MCF 10A (cell line): ENCODE measurements at regions of chr2 and their contacts with region 1.

Region 1: GRCh38 chr2:178414266-178415247 is 36.4 kb downstream of the PRKRA start:
- DNase-seq: peak; percentile 98
- H3K4me3 Mint-ChIP-seq: peak overlapping the region; percentile 96
- H3K27ac Mint-ChIP-seq: peak overlapping the region; percentile 91
- H3K4me1 Mint-ChIP-seq: peaks cover 27% of the 10 kb centered on the region
- H3K27me3 Mint-ChIP-seq: no peaks in the 10 kb centered on the region
- CTCF ChIP-seq: peak; percentile 71

Region 2: GRCh38 chr2:177174486-177174885 is 1240.1 kb before region 1 on chr2:
- CTCF ChIA-PET with region 1: no interaction called
- POLR2A ChIA-PET with region 1: no interaction called
- intact Hi-C with region 1: no loop called
- DNase-seq: no peak
- H3K4me3 Mint-ChIP-seq: no peak overlapping the region
- H3K27ac Mint-ChIP-seq: no peak overlapping the region
- H3K4me1 Mint-ChIP-seq: peaks cover 29% of the 10 kb centered on the region
- H3K27me3 Mint-ChIP-seq: no peaks in the 10 kb centered on the region
- CTCF ChIP-seq: no peak

Region 3: GRCh38 chr2:178112202-178113152 is 302.1 kb before region 1 on chr2 and contains the start of gene RBM45:
- CTCF ChIA-PET with region 1: interaction called, 67 read pairs
- POLR2A ChIA-PET with region 1: interaction called, 61 read pairs
- intact Hi-C with region 1: loop called (anchors 1 kb)
- DNase-seq: peak; percentile 97
- H3K4me3 Mint-ChIP-seq: peak within 1 kb of the TSS; percentile 93
- H3K27ac Mint-ChIP-seq: peak within 1 kb of the TSS; percentile 87
- H3K4me1 Mint-ChIP-seq: peaks cover 7% of the 10 kb centered on the region
- H3K27me3 Mint-ChIP-seq: no peaks in the 10 kb centered on the region
- CTCF ChIP-seq: peak; percentile 94
- total RNA-seq, gene RBM45: 12.7 and 14.5 TPM in 2 replicates

Region 4: GRCh38 chr2:178280244-178280852 is 134.2 kb before region 1 on chr2:
- CTCF ChIA-PET with region 1: interaction called, 12 read pairs
- POLR2A ChIA-PET with region 1: interaction called, 15 read pairs
- intact Hi-C with region 1: no loop called
- DNase-seq: peak; percentile 69
- H3K4me3 Mint-ChIP-seq: no peak overlapping the region
- H3K27ac Mint-ChIP-seq: no peak overlapping the region
- H3K4me1 Mint-ChIP-seq: peaks cover 47% of the 10 kb centered on the region
- H3K27me3 Mint-ChIP-seq: no peaks in the 10 kb centered on the region
- CTCF ChIP-seq: peak; percentile 71

Region 5: GRCh38 chr2:178363252-178363651 is 51.3 kb before region 1 on chr2:
- CTCF ChIA-PET with region 1: interaction called, 4 read pairs
- POLR2A ChIA-PET with region 1: interaction called, 13 read pairs
- intact Hi-C with region 1: no loop called
- DNase-seq: peak; percentile 92
- H3K4me3 Mint-ChIP-seq: peak overlapping the region; percentile 46
- H3K27ac Mint-ChIP-seq: peak overlapping the region; percentile 52
- H3K4me1 Mint-ChIP-seq: peaks cover 18% of the 10 kb centered on the region
- H3K27me3 Mint-ChIP-seq: no peaks in the 10 kb centered on the region
- CTCF ChIP-seq: no peak

Region 6: GRCh38 chr2:178428396-178428806 is 13.8 kb after region 1 on chr2:
- CTCF ChIA-PET with region 1: interaction called, 24 read pairs
- POLR2A ChIA-PET with region 1: interaction called, 9 read pairs
- intact Hi-C with region 1: no loop called
- DNase-seq: no peak
- H3K4me3 Mint-ChIP-seq: no peak overlapping the region
- H3K27ac Mint-ChIP-seq: peak overlapping the region; percentile 20
- H3K4me1 Mint-ChIP-seq: no peaks in the 10 kb centered on the region
- H3K27me3 Mint-ChIP-seq: no peaks in the 10 kb centered on the region
- CTCF ChIP-seq: no peak

Region 7: GRCh38 chr2:179017773-179018357 is 603.3 kb after region 1 on chr2:
- CTCF ChIA-PET with region 1: no interaction called
- POLR2A ChIA-PET with region 1: no interaction called
- intact Hi-C with region 1: no loop called
- DNase-seq: no peak
- H3K4me3 Mint-ChIP-seq: no peak overlapping the region
- H3K27ac Mint-ChIP-seq: no peak overlapping the region
- H3K4me1 Mint-ChIP-seq: no peaks in the 10 kb centered on the region
- H3K27me3 Mint-ChIP-seq: no peaks in the 10 kb centered on the region
- CTCF ChIP-seq: no peak